AG04449 (cell line): ENCODE measurements at regions of chr1 and their contacts with region 1.

Region 1: DNA sequence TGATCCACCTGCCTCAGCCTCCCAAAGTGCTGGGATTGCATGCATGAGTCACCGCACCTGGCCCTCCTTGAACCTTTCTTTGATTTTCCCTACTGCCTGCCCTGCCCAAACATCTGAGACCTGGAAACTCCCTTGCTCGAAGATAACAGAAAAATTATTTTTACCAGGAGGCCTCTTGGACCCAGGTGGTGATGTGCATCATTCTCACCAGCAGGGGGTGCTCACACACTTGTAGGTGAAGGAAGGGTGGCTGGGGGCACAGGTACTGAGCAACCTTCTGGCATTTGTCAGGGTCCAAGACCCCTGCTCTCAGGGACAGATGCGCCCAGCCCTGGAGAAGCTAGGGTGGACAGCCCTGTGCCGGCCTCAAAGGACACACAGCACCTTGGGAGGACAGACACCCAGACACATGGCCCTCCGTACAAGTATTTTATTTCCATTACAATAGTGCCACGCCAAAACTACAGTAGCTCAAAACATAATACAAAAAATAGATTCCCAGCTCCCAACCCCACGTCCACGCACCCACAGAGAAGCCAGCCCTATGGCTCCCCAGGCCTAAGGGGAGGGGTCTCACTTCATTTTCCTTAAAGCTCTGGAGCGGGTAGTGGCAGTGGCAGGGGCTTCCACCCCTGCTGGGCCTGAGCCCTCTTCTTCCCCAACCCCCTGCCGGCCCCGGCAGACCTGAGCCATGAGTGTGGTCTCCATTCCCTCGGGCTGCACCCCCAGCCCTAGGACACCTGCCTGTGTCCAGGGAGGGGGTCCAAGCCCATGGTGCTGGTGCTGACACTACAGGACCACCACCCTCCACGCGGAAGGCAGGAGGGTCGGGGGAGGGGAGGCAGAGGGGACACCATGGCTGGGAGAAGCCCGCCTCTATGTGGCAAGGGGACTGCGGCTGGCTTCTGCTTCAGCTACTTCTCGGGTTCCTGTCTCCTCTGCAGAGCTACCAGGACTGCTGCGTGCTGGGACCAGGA is 40.4 kb upstream of the EIF4G3 start:
- DNase-seq: no peak
- H3K4me3 ChIP-seq: no peak overlapping the region
- CTCF ChIP-seq: peak; percentile 72

Region 2: DNA sequence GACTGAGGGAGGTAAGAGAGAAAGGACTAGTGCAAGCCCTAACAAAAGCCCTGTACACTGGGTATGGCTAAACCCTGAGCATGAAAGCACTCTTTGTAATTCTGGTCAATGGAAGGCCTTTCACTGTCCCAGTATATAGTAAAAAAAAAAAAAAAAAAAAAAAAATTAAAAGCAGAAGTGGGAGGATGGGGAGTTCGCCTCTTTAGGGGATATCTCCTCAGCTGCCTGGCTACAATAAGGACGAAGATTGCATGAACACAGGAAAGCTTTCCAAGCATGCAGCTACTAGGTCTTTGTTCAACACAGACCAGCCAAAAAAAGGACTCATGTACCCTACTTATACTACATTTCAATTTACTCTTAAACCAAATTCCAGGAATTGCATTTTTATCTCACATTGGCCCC is 99.5 kb before region 1 on chr1:
- CTCF ChIA-PET with region 1: no interaction called
- POLR2A ChIA-PET with region 1: no interaction called
- DNase-seq: no peak
- H3K4me3 ChIP-seq: no peak overlapping the region
- CTCF ChIP-seq: no peak

Region 3: GRCh38 chr1:21238141-21238800 is 21.1 kb after region 1 on chr1:
- CTCF ChIA-PET with region 1: interaction called, 30 read pairs
- POLR2A ChIA-PET with region 1: no interaction called
- DNase-seq: peak; percentile 77
- H3K4me3 ChIP-seq: no peak overlapping the region
- CTCF ChIP-seq: no peak

Region 4: GRCh38 chr1:21350187-21350885 is 133.2 kb after region 1 on chr1:
- CTCF ChIA-PET with region 1: interaction called, 10 read pairs
- POLR2A ChIA-PET with region 1: no interaction called
- DNase-seq: no peak
- H3K4me3 ChIP-seq: no peak overlapping the region
- CTCF ChIP-seq: no peak

Region 5: GRCh38 chr1:21361506-21361905 is 144.4 kb after region 1 on chr1:
- CTCF ChIA-PET with region 1: interaction called, 71 read pairs
- POLR2A ChIA-PET with region 1: no interaction called
- DNase-seq: no peak
- H3K4me3 ChIP-seq: no peak overlapping the region
- CTCF ChIP-seq: no peak